ENCODE measurements at regions of chr11 and their contacts with region 1.

Region 1: DNA sequence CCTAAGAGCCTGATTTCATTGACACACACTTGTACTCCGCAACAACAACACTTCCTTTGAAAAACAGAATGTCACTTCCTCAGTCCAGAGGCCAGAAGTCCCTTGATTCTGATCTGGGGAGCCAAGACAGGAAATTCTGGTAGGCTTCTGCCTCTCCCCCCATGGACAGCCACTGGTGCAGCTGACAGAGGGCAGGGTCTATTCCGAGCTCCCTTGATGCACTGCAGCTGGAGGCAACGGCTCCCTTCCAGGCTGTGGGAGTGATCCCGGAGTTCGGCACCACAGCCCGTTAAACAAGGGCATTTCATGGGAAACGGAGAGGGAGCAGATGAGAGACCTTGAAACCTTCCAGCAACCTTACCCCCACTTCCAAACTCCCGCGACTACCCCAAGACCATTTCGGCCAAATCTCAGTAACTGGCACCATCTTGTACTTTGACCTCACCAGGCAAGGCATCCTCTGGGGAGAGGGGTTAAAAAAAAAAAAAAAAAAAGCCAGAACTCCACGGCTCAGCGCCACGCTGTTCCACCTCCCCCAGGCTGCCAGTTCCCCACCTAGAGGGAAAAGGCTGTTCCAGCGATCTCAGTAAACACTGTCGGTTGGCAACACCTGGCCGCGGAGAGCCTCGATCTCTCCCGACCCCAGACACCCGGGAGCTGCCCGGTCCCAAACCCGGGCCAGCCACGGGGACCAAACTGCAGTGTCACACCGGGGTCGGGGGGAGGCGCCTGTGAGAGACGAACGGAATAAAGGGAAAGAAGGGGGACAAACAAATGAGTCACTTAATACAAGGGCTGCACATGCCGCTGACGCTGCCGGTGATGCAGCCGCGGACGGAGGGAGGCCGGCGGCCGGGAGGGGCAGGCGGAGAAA is 1.1 kb downstream of the GAB2 start:
- DNase-seq: peak; percentile 91 to 95 (median 93)
- ATAC-seq: peak; percentile 76 to 80
- H3K4me3 ChIP-seq: peak overlapping the region; percentile 99
- H3K27ac ChIP-seq: peak overlapping the region; percentile 80
- H3K4me1 ChIP-seq: peaks cover 6% of the 10 kb centered on the region
- H3K27me3 ChIP-seq: no peaks in the 10 kb centered on the region

Region 2: GRCh38 chr11:78139422-78140391 is 276.8 kb before region 1 on chr11 and contains the start of gene ALG8:
- intact Hi-C with region 1: loop called in 1 of 4 experiments (anchors 10 kb)
- DNase-seq: peak; percentile 96 to 99 (median 99)
- ATAC-seq: peak; percentile 99
- H3K4me3 ChIP-seq: peak within 1 kb of the TSS; percentile 88
- H3K27ac ChIP-seq: peak within 1 kb of the TSS; percentile 76
- H3K4me1 ChIP-seq: peaks cover 2% of the 10 kb centered on the region
- H3K27me3 ChIP-seq: no peaks in the 10 kb centered on the region
- total RNA-seq, gene ALG8: 13.2 to 26.0 (median 20.0) TPM

Region 3: DNA sequence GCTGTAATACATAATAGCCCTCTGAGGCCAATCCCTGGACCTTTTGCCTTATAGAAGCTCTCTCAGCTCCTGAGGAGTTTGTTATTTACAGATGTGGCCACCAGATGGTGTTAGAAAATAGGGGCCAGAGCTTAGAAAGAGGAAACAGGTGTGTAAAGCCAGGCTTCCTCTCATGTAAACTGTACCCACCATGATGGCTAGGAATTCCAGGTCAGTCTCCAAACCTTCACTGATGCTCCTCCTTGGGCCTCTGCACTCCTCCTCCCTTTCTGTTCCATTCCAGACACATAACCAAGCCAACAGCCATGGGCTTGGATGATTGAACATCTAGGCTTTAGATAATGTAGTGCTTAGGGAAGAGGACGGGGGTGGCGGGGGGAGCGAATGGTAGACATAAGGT is 188.1 kb before region 1 on chr11:
- intact Hi-C with region 1: loop called (anchors 5 to 10 kb)
- DNase-seq: no peak
- ATAC-seq: peak; percentile 43 to 58
- H3K4me3 ChIP-seq: no peak overlapping the region
- H3K27ac ChIP-seq: no peak overlapping the region
- H3K4me1 ChIP-seq: peaks cover 10% of the 10 kb centered on the region
- H3K27me3 ChIP-seq: no peaks in the 10 kb centered on the region

Region 4: GRCh38 chr11:78256962-78257361 is 159.6 kb before region 1 on chr11:
- intact Hi-C with region 1: loop called in 1 of 4 experiments (anchors 10 kb)
- DNase-seq: peak; percentile 93 to 96 (median 96)
- ATAC-seq: peak; percentile 96 to 99
- H3K4me3 ChIP-seq: no peak overlapping the region
- H3K27ac ChIP-seq: peak overlapping the region; percentile 95
- H3K4me1 ChIP-seq: peaks cover 20% of the 10 kb centered on the region
- H3K27me3 ChIP-seq: no peaks in the 10 kb centered on the region

Region 5: GRCh38 chr11:78349624-78350023 is 66.9 kb before region 1 on chr11:
- intact Hi-C with region 1: loop called in 1 of 4 experiments (anchors 10 kb)
- DNase-seq: no peak
- ATAC-seq: peak; percentile 18 to 27
- H3K4me3 ChIP-seq: no peak overlapping the region
- H3K27ac ChIP-seq: peak overlapping the region; percentile 65
- H3K4me1 ChIP-seq: peaks cover 9% of the 10 kb centered on the region
- H3K27me3 ChIP-seq: no peaks in the 10 kb centered on the region

Region 6: GRCh38 chr11:78564490-78565467 is 148.2 kb after region 1 on chr11:
- intact Hi-C with region 1: loop called (anchors 10 kb)
- DNase-seq: no peak
- ATAC-seq: peak; percentile 42 to 52
- H3K4me3 ChIP-seq: no peak overlapping the region
- H3K27ac ChIP-seq: no peak overlapping the region
- H3K4me1 ChIP-seq: no peaks in the 10 kb centered on the region
- H3K27me3 ChIP-seq: no peaks in the 10 kb centered on the region

Measured in right cardiac atrium (tissue), 5 donors.